ENCODE measurements at regions of chr5 and their contacts with region 1.

Region 1: DNA sequence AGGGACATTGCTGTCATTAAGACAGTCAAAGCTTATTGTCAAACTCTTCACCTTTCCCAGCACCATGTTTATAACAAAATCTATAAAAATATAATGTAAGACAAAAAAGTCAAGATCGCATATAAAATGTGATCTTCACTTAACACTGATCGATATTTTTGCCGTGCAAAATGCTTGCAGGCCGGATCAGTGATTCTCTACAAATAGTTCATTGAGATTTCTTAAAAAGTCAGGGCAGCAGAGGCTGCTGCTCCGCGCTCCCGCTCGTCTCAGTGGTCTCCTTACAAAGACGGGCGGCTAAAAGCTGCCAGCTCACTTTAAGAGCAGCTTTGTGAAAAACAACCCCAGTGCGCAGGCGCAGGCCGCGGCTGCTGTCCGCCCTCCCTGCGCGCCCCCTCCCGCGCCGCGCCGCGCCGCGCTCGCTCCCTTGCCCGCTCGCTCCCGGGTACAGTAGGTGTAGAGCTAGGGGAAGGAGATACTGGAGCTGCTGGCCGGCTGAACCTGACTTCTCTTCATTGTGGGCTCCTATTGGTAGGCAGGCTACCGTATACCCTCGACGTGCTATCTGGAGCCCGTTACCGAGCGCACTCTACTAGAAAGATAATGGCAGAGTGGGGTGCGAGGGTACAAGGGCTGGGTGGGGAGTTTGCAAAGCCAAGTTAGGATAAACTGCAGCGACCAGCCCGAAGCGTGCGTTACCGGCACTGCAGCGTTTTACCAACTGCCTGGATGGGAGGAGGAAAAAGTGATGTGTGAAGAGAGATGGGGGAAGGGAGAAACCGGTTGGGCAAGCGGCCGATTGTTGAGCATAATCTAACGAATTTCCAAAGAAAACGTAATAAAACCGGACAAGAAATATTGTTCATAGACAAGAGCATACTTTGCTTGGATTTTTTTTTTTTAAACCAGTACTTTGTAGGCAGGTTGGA is at the start of gene ARRDC3:
- DNase-seq: peak; percentile 98
- H3K4me3 ChIP-seq: peak within 1 kb of the TSS; percentile 89 to 99 (median 90)
- H3K27ac ChIP-seq: peak within 1 kb of the TSS; percentile 96
- H3K4me1 ChIP-seq: peaks cover 17% of the 10 kb centered on the region
- H3K27me3 ChIP-seq: no peaks in the 10 kb centered on the region
- CTCF ChIP-seq: no peak
- POLR2A ChIP-seq: peak; percentile 99
- total RNA-seq, gene ARRDC3: 35.3 and 43.1 TPM in 2 replicates

Region 2: DNA sequence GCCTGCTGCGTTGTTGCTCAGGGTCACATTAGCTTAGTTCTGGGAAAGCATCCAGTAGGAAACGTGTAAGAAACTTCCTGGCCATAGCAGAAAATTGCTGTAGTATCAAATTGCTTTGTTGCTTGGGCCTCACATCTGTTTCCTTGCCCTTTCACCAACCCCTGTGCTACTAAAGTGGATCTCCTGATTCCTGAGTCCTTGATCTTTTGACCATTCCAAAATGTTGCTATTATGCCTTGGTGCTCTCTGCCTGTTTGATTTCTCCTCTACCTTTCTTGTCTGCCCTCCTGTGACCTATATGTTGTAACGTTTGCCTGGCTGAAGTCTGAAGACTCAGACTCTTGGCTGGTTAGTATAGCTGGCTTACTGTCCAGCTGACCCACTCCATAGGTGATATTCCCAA is 474.2 kb before region 1 on chr5:
- CTCF ChIA-PET with region 1: interaction called, 15 read pairs
- POLR2A ChIA-PET with region 1: interaction called, 5 read pairs
- dilution Hi-C with region 1: no loop called
- intact Hi-C with region 1: no loop called
- DNase-seq: peak; percentile 93
- H3K4me3 ChIP-seq: no peak overlapping the region
- H3K27ac ChIP-seq: peak overlapping the region; percentile 48
- H3K4me1 ChIP-seq: peaks cover 12% of the 10 kb centered on the region
- H3K27me3 ChIP-seq: no peaks in the 10 kb centered on the region
- CTCF ChIP-seq: no peak
- POLR2A ChIP-seq: no peak

Region 3: GRCh38 chr5:91052977-91053740 is 330.1 kb before region 1 on chr5:
- CTCF ChIA-PET with region 1: interaction called, 6 read pairs
- POLR2A ChIA-PET with region 1: interaction called, 8 read pairs
- dilution Hi-C with region 1: no loop called
- intact Hi-C with region 1: loop called (anchors 2 kb)
- DNase-seq: peak; percentile 78
- H3K4me3 ChIP-seq: no peak overlapping the region
- H3K27ac ChIP-seq: peak overlapping the region; percentile 23
- H3K4me1 ChIP-seq: peaks cover 10% of the 10 kb centered on the region
- H3K27me3 ChIP-seq: no peaks in the 10 kb centered on the region
- CTCF ChIP-seq: no peak
- POLR2A ChIP-seq: no peak

Region 4: DNA sequence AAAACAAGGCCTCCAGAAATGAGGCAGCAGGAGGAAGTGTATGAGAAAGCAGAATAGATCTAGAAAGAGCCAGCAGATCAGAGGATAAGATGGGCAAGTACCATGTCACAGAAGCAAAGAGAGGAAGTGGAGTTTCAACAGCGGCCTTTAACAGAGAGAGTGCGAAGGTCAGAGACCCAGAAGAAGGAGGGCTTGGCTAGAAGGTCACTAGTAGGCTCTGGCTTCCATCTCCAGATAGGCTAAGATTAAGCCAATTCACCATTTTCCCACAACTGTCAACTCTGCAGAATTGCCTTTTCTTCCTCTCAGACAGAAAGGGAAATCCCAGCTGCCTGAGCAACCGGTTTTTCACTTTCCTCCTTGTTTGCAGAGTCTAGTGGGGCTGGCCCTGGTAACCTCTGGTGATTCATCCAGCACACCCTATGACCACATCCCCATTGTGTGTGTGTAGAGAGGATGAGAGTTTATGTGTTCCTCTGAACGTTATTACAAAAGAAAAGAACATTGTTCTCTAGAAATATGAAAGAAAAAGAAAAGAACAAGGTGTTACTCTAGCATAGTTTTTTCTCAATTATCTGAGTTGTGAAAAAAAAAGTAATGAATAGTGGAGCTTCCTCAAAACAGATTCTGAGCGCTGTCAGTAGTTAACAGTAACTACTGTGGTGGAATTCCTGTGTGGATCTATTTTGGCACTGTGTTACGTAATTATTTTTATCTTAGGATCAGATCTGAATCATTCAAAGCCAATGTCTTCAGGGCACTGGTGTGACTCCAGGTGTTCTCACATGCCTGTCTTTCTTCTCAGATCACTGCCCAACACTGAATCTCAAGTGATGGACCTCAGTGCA is 220.5 kb before region 1 on chr5:
- CTCF ChIA-PET with region 1: interaction called, 9 read pairs
- POLR2A ChIA-PET with region 1: interaction called, 6 read pairs
- dilution Hi-C with region 1: no loop called
- intact Hi-C with region 1: loop called (anchors 1 kb)
- DNase-seq: peak; percentile 98
- H3K4me3 ChIP-seq: no peak overlapping the region
- H3K27ac ChIP-seq: peak overlapping the region; percentile 84
- H3K4me1 ChIP-seq: peaks cover 42% of the 10 kb centered on the region
- H3K27me3 ChIP-seq: no peaks in the 10 kb centered on the region
- CTCF ChIP-seq: no peak
- POLR2A ChIP-seq: no peak

Region 5: GRCh38 chr5:91219803-91220371 is 163.4 kb before region 1 on chr5:
- CTCF ChIA-PET with region 1: interaction called, 216 read pairs
- POLR2A ChIA-PET with region 1: interaction called, 7 read pairs
- dilution Hi-C with region 1: no loop called
- intact Hi-C with region 1: loop called (anchors 1 kb)
- DNase-seq: peak; percentile 63
- H3K4me3 ChIP-seq: no peak overlapping the region
- H3K27ac ChIP-seq: no peak overlapping the region
- H3K4me1 ChIP-seq: no peaks in the 10 kb centered on the region
- H3K27me3 ChIP-seq: no peaks in the 10 kb centered on the region
- CTCF ChIP-seq: peak; percentile 30 to 57
- POLR2A ChIP-seq: no peak

Region 6: DNA sequence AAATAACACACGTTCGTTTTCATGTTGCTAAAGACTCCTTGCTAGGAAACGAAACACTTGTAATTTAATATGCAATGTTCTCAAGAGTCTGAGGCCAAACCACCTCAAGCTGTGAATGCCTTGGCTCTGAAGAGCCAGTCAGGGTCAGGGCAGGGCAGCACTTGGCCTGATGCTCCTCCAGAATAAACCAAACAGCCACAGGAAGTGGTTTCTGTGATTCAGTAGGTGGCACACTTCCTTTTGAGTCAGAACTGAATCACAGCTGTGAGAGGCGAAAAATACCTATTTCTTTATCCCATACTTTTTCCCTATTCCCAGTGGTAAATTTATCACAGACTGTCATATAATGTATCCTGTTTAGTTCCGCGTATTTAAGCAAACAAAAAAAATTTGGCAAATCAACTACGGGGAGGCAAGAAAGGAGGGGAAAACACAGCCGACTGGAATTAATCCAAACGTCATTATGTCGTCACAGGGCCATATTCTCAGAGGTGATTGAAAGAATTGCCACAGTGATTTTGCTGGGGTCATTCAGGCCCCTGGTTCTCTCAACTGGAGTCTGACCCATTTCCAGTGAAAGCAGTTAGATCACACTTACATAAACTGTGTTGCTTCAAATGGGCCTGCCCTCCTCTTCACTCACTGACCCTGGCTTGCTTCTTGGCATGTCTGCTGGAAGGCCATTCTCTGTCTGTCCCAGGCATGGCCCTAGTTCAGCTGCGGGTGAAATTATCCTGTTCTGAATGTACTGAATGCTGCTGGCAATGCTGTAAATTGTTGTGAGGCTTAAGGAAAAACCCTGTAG is 71.4 kb before region 1 on chr5:
- CTCF ChIA-PET with region 1: interaction called, 21 read pairs
- POLR2A ChIA-PET with region 1: interaction called, 13 read pairs
- dilution Hi-C with region 1: no loop called
- intact Hi-C with region 1: loop called (anchors 1 kb)
- DNase-seq: peak; percentile 97
- H3K4me3 ChIP-seq: no peak overlapping the region
- H3K27ac ChIP-seq: peak overlapping the region; percentile 100
- H3K4me1 ChIP-seq: peaks cover 33% of the 10 kb centered on the region
- H3K27me3 ChIP-seq: no peaks in the 10 kb centered on the region
- CTCF ChIP-seq: no peak
- POLR2A ChIP-seq: no peak

Measured in endothelial cell of umbilical vein (primary cell).